Tibial artery (tissue), 4 donors: ENCODE measurements at regions of chr1 and their contacts with region 1.

Region 1: DNA sequence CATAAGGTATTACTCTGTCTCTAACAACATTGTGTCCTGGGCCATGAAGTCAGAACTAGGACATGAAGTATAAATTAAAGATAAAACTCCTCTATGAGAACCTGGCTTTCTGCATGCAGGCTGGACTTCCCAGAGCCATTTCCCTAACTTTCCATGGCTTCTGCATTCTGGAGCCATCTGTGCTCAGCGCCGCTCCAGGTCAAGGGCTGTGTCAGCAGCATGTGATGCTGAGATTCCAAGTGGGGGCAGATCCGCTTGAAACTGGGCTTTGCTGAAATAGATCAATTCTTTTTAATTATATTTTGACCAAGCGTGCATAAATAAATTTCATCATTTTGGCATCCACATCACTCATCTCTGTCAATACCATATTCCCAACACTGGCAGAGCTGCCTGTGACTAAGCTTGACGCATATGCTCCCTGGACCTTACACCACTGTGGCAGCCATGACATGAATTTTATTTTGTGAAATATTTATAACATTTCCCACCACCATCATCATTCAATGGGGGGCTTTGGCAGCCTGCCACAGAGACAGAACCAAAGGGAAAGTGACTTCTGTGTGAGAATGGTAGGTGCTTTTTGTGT is 110.4 kb upstream of the KCNK1 start:
- DNase-seq: no peak
- H3K4me3 ChIP-seq: no peak overlapping the region
- H3K27ac ChIP-seq: no peak overlapping the region
- H3K4me1 ChIP-seq: no peaks in the 10 kb centered on the region
- H3K27me3 ChIP-seq: no peaks in the 10 kb centered on the region
- CTCF ChIP-seq: no peak

Region 2: GRCh38 chr1:232558954-232559353 is 944.5 kb before region 1 on chr1:
- intact Hi-C with region 1: loop called (anchors 5 kb)
- DNase-seq: no peak
- H3K4me3 ChIP-seq: no peak overlapping the region
- H3K27ac ChIP-seq: no peak overlapping the region
- H3K4me1 ChIP-seq: peaks cover 0 to 12% (median 7%) of the 10 kb centered on the region in 4 donors
- H3K27me3 ChIP-seq: no peaks in the 10 kb centered on the region
- CTCF ChIP-seq: no peak